WTC11 (cell line): ENCODE measurements at regions of chr12 and their contacts with region 1.

Region 1: GRCh38 chr12:55738123-55739024 is 4.5 kb upstream of the GDF11 start:
- DNase-seq: peak; percentile 90
- ATAC-seq: peak; percentile 77
- H3K4me3 Mint-ChIP-seq: peak overlapping the region; percentile 81
- H3K27ac Mint-ChIP-seq: peak overlapping the region; percentile 86
- H3K4me1 Mint-ChIP-seq: peaks cover 31% of the 10 kb centered on the region
- H3K27me3 Mint-ChIP-seq: peaks cover 2% of the 10 kb centered on the region; the same call in 1 of the 2 replicates
- CTCF ChIP-seq: peak; percentile 73

Region 2: GRCh38 chr12:55647027-55647426 is 91.3 kb before region 1 on chr12:
- CTCF ChIA-PET with region 1: interaction called, 10 read pairs
- POLR2A ChIA-PET with region 1: no interaction called
- DNase-seq: no peak
- ATAC-seq: no peak
- H3K4me3 Mint-ChIP-seq: no peak overlapping the region
- H3K27ac Mint-ChIP-seq: peak overlapping the region; percentile 52; the same call in 1 of the 2 replicates
- H3K4me1 Mint-ChIP-seq: peaks cover 19% of the 10 kb centered on the region
- H3K27me3 Mint-ChIP-seq: peaks cover 16% of the 10 kb centered on the region
- CTCF ChIP-seq: no peak

Region 3: DNA sequence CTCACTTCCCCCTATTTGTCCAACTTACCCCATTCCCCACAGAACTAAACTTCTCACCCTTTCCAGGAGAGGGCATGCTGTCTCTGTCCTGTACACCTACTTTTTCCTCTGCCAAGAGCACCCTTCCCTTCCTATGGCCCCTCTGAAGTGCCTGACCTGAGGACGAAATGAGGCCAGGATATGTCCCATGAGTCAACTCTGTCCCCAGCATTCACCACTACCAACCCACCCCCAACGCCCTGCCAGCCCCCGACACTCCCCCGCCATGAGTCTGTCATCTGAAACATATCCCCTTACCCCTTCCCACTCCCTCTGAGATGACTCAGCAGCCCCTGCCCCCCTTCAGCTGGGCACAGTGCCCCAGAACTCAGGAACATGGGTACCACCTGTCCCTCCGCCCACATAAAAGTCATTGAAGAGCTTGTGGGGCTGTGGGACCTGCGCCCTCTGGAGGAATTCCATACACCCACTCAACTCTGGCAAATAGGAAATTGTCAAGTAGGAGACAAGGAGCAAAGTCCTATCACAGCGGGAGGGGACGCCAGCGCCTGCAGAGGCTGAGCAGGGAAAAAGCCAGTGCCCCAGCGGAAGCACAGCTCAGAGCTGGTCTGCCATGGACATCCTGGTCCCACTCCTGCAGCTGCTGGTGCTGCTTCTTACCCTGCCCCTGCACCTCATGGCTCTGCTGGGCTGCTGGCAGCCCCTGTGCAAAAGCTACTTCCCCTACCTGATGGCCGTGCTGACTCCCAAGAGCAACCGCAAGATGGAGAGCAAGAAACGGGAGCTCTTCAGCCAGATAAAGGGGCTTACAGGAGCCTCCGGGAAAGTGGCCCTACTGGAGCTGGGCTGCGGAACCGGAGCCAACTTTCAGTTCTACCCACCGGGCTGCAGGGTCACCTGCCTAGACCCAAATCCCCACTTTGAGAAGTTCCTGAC is 57.0 kb before region 1 on chr12:
- CTCF ChIA-PET with region 1: interaction called, 65 read pairs
- POLR2A ChIA-PET with region 1: interaction called, 3 read pairs
- DNase-seq: peak; percentile 81
- ATAC-seq: peak; percentile 89
- H3K4me3 Mint-ChIP-seq: peak overlapping the region; percentile 70
- H3K27ac Mint-ChIP-seq: 0 out of 2 replicates have a peak overlapping the region, but pooled peaks have one; percentile 25
- H3K4me1 Mint-ChIP-seq: peaks cover 14% of the 10 kb centered on the region
- H3K27me3 Mint-ChIP-seq: peaks cover 2% of the 10 kb centered on the region
- CTCF ChIP-seq: no peak

Region 4: DNA sequence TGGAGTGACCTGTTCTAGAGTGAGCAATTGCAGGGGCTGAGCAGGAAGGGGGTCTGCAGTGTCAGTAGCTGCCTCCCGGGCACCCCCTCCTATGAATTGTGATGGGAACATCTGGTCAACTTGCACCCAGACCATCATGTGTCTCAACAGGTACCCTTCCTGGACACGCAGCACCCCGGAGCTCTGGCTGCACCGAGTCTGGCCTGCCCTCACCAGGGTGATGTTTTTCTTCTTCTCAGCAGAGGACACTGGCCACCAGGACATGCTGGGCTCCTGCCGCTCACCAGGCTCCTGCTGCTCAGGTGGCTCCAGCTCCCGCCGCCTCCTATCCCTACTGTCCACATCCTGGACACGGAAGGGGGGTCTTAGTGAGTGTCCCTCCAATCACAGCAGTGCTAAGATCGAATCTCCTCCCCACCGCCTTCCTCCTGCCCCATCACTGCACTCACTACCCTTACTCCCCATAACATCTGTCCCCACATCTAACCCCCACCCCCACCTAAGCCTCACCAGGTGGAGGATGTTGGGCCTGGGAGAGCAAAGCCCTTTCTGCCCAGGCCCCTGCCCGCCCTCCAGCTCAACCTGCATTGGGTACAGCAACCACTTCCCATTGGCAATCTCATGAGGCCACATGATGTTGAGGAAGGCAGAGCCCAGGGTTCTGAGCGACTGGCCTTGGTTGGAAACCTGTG is 45.6 kb before region 1 on chr12:
- CTCF ChIA-PET with region 1: no interaction called
- POLR2A ChIA-PET with region 1: no interaction called
- DNase-seq: no peak
- ATAC-seq: no peak
- H3K4me3 Mint-ChIP-seq: no peak overlapping the region
- H3K27ac Mint-ChIP-seq: no peak overlapping the region
- H3K4me1 Mint-ChIP-seq: no peaks in the 10 kb centered on the region
- H3K27me3 Mint-ChIP-seq: no peaks in the 10 kb centered on the region
- CTCF ChIP-seq: no peak

Region 5: DNA sequence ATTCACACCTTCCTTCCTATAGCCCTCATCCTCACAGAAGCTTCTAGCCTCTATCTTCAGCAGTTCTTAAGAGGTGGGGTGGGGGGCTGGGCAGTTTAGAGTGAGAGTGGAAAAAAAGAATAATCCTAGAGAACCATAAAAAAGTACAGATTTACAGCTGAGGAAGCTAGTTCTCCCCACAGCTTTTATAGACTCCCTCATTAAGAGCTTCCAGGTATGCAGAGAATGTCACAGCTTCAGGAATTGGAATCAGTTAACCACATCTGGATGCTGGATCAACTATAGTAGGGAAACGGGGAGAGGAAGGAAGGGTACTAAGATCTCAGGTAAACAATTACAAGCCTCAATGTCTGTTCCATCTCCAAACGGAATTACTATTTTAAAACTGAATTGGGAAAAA is 16.9 kb after region 1 on chr12:
- CTCF ChIA-PET with region 1: interaction called, 54 read pairs
- POLR2A ChIA-PET with region 1: interaction called, 4 read pairs
- DNase-seq: no peak
- ATAC-seq: 0 out of 2 replicates have a peak, but pooled peaks have one; percentile 17
- H3K4me3 Mint-ChIP-seq: no peak overlapping the region
- H3K27ac Mint-ChIP-seq: peak overlapping the region; percentile 10
- H3K4me1 Mint-ChIP-seq: peaks cover 18% of the 10 kb centered on the region
- H3K27me3 Mint-ChIP-seq: no peaks in the 10 kb centered on the region
- CTCF ChIP-seq: no peak

Region 6: GRCh38 chr12:55812088-55812487 is 73.7 kb after region 1 on chr12:
- CTCF ChIA-PET with region 1: interaction called, 97 read pairs
- POLR2A ChIA-PET with region 1: interaction called, 16 read pairs
- DNase-seq: no peak
- ATAC-seq: no peak
- H3K4me3 Mint-ChIP-seq: peak overlapping the region; percentile 7
- H3K27ac Mint-ChIP-seq: peak overlapping the region; percentile 14
- H3K4me1 Mint-ChIP-seq: peaks cover 42% of the 10 kb centered on the region
- H3K27me3 Mint-ChIP-seq: no peaks in the 10 kb centered on the region
- CTCF ChIP-seq: no peak

Region 7: DNA sequence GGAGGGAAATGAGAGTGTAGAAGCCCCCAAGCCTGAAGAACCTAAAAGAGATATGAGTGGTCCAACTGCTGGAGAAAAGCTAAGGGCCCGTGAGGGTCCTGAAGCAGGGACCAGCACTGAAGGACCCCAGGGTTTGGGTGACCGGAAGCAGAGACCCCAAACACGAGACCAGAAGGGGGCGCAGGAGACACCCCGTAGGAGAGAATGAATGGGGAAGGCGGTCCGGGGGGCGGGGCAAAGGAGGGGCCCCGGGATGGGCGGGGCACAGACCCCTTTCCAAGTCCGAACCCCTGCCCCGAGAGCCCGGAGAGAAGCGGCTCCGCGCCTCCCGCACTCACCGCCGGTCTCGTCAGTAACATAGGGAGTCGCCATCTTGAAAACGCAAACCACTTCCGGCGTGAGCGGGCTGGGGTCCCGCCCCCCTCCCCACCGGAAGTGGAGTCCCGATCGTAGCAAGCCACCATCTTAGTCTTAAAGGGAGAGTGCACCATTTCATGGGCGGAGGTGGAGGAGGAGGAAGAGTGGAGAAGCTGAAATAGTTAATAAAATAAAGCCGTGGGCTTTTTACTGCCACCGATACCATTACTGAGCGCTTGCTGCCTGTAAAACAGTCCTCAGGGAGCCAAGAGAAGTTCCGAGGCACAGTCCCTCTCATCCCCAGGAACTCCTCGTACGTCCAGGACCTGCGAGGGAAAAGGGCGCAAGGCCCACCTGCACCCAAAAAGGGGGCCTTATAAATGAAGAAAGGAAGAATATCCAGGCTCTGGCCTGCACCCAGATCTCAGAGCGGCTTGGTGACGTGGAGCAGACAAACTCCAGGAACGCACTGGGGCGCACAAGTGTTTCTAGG is 188.6 kb after region 1 on chr12:
- CTCF ChIA-PET with region 1: interaction called, 40 read pairs
- POLR2A ChIA-PET with region 1: no interaction called
- DNase-seq: peak; percentile 95
- ATAC-seq: peak; percentile 56
- H3K4me3 Mint-ChIP-seq: peak overlapping the region; percentile 94
- H3K27ac Mint-ChIP-seq: peak overlapping the region; percentile 96
- H3K4me1 Mint-ChIP-seq: peaks cover 42% of the 10 kb centered on the region
- H3K27me3 Mint-ChIP-seq: peaks cover 10% of the 10 kb centered on the region
- CTCF ChIP-seq: peak; percentile 51

Region 8: DNA sequence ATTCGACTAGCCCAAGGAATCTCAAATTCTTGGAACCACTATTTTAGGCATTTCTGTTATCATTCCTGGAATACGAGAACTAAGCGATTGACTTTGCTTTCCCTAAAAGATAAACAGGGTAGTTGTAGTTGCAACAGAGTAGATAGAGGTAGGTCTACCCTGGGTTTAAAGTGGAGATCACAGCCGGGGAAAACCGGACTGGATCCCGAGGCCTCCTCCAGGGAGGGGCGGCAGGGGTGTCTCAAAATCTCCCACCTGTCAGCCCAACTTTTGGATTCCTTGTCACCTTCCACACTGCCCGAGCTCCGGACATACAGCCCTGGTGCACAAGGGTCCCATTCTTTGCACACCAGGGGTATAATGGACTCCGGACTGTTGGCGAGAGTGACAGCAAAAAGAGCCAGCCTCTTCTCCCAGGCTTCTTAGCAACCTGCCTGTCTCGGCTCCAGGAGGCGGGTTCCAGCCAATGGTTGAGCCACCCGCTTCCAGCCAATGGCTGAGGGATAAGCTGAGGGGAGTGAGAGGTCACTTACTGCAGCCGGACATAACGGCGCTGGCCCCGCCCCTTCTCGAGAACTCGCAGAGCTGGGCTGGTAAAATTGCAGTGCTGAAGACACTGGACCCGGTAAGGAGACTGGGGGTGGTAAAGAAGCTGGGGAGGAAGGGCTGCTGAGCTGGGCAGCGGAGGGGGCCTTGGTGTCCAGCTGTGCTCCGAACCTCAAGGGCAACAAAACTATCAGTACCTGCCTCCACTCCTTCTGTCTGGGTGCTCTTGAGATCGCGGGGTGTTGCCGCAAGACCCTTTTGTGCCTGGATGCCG is 258.6 kb after region 1 on chr12 and contains the start of gene SUOX:
- CTCF ChIA-PET with region 1: interaction called, 35 read pairs
- POLR2A ChIA-PET with region 1: no interaction called
- DNase-seq: peak; percentile 96
- ATAC-seq: peak; percentile 99
- H3K4me3 Mint-ChIP-seq: peak within 1 kb of the TSS; percentile 95
- H3K27ac Mint-ChIP-seq: peak within 1 kb of the TSS; percentile 96
- H3K4me1 Mint-ChIP-seq: 0 out of 2 replicates have a peak, but pooled peaks cover 7% of the 10 kb centered on the region
- H3K27me3 Mint-ChIP-seq: no peaks in the 10 kb centered on the region
- CTCF ChIP-seq: no peak
- total RNA-seq, gene SUOX: 20.3 to 23.2 TPM (median 23.2 TPM) in 3 replicates